ENCODE measurements at regions of chr14 and their contacts with region 1.

Region 1: DNA sequence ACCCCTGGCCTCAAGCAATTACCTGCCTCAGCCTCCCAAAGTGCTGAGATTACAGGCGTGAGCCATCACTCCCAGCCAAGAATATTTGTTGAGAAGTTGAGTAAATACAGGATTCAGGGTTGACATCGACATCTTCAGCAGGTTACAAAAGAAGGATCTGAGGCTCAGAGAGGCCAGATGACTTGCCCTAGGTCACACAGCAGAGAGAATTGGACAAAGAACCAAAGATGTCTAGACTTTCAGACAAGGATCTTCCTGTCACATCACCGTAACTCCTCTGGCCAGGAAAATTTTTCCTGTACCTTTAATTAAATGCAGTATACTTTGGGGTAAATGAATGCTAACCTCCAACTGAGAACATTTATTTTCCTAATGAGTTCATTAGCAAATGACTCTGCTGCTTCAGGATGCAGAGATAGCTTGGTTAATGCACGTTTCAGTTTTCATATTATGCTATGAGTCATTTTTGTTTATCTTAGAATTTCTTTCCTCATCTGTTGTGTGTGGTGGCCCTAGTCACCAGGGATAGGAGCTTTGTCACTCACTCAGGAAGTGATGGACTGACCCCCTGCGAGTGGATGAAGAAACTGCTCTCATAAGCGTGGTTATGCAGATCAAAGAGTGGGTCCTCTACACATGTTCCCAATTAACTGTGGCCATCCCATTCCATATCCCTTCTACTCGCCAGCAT is 9.0 kb downstream of the TC2N start:
- DNase-seq: peak in 1 of 2 experiments; percentile 34
- H3K4me3 ChIP-seq: no peak overlapping the region
- H3K4me3 Mint-ChIP-seq: no peak overlapping the region
- H3K27ac Mint-ChIP-seq: no peak overlapping the region
- H3K4me1 ChIP-seq: no peaks in the 10 kb centered on the region
- H3K4me1 Mint-ChIP-seq: no peaks in the 10 kb centered on the region
- H3K27me3 ChIP-seq: no peaks in the 10 kb centered on the region
- H3K27me3 Mint-ChIP-seq: no peaks in the 10 kb centered on the region
- CTCF ChIP-seq: no peak

Region 2: DNA sequence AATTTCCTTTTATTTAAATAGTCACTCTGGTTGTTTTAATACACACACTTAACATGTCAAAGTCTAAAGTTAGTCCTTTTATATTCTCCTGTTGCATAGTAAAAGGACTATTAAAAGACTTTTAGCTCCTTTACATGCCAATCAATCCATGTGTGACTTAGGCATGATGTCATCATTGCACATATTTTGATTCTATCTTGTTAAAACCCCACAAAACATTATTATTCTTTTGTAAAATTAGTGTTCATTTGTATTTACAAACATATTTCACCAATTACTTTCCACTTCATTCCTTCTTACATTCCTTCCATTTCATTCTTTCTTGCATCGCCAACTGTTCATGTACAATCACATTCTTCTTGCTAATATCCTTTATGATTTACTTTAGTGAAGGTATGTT is 30.6 kb before region 1 on chr14:
- CTCF ChIA-PET with region 1: no interaction called
- POLR2A ChIA-PET with region 1: no interaction called
- intact Hi-C with region 1: no loop called
- DNase-seq: no peak
- H3K4me3 ChIP-seq: no peak overlapping the region
- H3K4me3 Mint-ChIP-seq: no peak overlapping the region
- H3K27ac Mint-ChIP-seq: no peak overlapping the region
- H3K4me1 ChIP-seq: peaks cover 21% of the 10 kb centered on the region
- H3K4me1 Mint-ChIP-seq: peaks cover 22% of the 10 kb centered on the region
- H3K27me3 ChIP-seq: no peaks in the 10 kb centered on the region
- H3K27me3 Mint-ChIP-seq: no peaks in the 10 kb centered on the region
- CTCF ChIP-seq: no peak

Region 3: DNA sequence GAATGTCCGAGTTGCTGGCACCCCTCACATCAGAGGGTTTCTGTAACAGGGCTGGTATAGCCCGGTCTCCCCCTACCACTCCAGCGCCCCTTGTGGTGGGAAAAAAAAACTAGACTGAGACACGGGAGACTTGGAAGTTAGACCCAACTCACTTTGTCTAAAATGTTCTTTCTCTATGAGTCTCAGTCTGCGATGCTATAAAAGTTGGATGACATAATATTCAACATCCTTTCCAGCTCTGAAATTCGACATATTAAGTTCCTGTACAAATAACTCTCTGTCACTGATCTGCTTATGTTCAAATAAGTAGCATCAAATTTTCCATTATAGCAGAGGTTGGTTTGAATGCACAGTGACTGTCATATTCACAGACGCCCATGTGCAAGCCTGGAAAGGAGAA is 34.6 kb after region 1 on chr14:
- CTCF ChIA-PET with region 1: interaction called, 7 read pairs
- POLR2A ChIA-PET with region 1: no interaction called
- intact Hi-C with region 1: loop called (anchors 5 kb)
- DNase-seq: peak in 1 of 2 experiments; percentile 50
- H3K4me3 ChIP-seq: no peak overlapping the region
- H3K4me3 Mint-ChIP-seq: no peak overlapping the region
- H3K27ac Mint-ChIP-seq: no peak overlapping the region
- H3K4me1 ChIP-seq: no peaks in the 10 kb centered on the region
- H3K4me1 Mint-ChIP-seq: no peaks in the 10 kb centered on the region
- H3K27me3 ChIP-seq: no peaks in the 10 kb centered on the region
- H3K27me3 Mint-ChIP-seq: no peaks in the 10 kb centered on the region
- CTCF ChIP-seq: peak; percentile 51 to 57

Region 4: DNA sequence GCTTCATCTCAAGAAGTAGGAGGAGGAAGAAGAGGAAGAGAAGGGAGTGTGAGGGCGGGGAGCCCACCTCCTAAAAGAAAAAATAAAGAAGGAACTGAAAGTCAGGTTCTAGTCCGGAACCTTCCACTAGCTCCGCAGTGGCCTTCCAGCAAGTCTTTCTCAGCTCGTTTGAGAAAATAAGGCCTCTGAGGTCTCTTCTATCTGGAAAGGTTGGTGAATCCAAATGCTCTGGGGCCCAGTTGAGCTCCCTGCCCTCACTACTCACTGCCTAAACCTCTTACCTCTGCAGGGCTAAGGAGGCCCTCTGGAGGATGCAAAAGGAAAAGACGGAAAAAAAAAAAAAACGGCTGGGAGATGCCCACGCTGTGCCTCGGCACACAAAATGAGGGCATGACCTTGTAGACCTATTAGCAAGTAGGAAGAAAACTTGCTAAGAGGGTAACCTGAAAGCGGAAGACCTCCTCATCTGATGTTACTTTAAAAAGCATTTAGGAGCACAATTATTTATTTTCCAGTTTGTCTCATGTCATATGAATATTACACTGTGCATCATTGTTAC is 53.2 kb after region 1 on chr14:
- CTCF ChIA-PET with region 1: interaction called, 18 read pairs
- POLR2A ChIA-PET with region 1: no interaction called
- intact Hi-C with region 1: loop called (anchors 1 kb)
- DNase-seq: peak; percentile 43 to 45
- H3K4me3 ChIP-seq: no peak overlapping the region
- H3K4me3 Mint-ChIP-seq: no peak overlapping the region
- H3K27ac Mint-ChIP-seq: no peak overlapping the region
- H3K4me1 ChIP-seq: no peaks in the 10 kb centered on the region
- H3K4me1 Mint-ChIP-seq: no peaks in the 10 kb centered on the region
- H3K27me3 ChIP-seq: no peaks in the 10 kb centered on the region
- H3K27me3 Mint-ChIP-seq: no peaks in the 10 kb centered on the region
- CTCF ChIP-seq: peak in 1 of 2 experiments; percentile 52

Region 5: GRCh38 chr14:91947471-91948184 is 89.3 kb after region 1 on chr14 and contains the start of gene FBLN5:
- CTCF ChIA-PET with region 1: no interaction called
- POLR2A ChIA-PET with region 1: no interaction called
- intact Hi-C with region 1: no loop called
- DNase-seq: peak; percentile 46 to 71
- H3K4me3 ChIP-seq: peak within 1 kb of the TSS; percentile 49
- H3K4me3 Mint-ChIP-seq: peak within 1 kb of the TSS; percentile 84
- H3K27ac Mint-ChIP-seq: peak within 1 kb of the TSS; percentile 50
- H3K4me1 ChIP-seq: peaks cover 7% of the 10 kb centered on the region; the same call in 1 of the 2 replicates
- H3K4me1 Mint-ChIP-seq: no peaks in the 10 kb centered on the region
- H3K27me3 ChIP-seq: no peaks in the 10 kb centered on the region
- H3K27me3 Mint-ChIP-seq: no peaks in the 10 kb centered on the region
- CTCF ChIP-seq: no peak
- total RNA-seq, gene FBLN5: 9.2 and 13.9 TPM in 2 replicates

Measured in Caco-2 (cell line).